A673 (cell line): ENCODE measurements at regions of chr9 and their contacts with region 1.

Region 1: GRCh38 chr9:71690063-71690688 is 78.1 kb downstream of the CEMIP2 start:
- DNase-seq: no peak
- H3K4me3 ChIP-seq: no peak overlapping the region
- H3K27ac ChIP-seq: no peak overlapping the region
- H3K4me1 ChIP-seq: peaks cover 6% of the 10 kb centered on the region
- H3K27me3 ChIP-seq: no peaks in the 10 kb centered on the region
- CTCF ChIP-seq: no peak

Region 2: DNA sequence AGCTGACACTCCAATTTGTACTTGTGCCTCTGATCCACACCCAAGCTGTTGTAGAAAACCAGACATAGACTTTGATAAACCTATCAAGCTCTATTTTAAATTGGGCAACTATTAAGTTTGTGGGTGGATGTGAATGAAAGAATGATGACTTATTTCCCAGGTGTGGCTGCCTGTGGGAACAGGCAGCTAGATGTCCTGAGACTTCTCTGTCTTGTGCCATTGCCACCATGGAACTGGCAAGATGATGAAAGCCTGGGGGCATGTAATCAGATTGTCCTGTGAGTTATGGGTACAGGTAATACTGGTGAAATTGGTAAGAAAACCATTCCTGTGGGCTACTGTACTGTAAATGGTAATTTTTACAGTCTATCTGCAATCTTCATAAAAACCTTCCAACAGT is 20.7 kb after region 1 on chr9:
- CTCF ChIA-PET with region 1: no interaction called
- POLR2A ChIA-PET with region 1: no interaction called
- intact Hi-C with region 1: loop called (anchors 2 kb)
- DNase-seq: no peak
- H3K4me3 ChIP-seq: no peak overlapping the region
- H3K27ac ChIP-seq: no peak overlapping the region
- H3K4me1 ChIP-seq: no peaks in the 10 kb centered on the region
- H3K27me3 ChIP-seq: no peaks in the 10 kb centered on the region
- CTCF ChIP-seq: no peak